ENCODE measurements at regions of chr14 and their contacts with region 1.

Region 1: DNA sequence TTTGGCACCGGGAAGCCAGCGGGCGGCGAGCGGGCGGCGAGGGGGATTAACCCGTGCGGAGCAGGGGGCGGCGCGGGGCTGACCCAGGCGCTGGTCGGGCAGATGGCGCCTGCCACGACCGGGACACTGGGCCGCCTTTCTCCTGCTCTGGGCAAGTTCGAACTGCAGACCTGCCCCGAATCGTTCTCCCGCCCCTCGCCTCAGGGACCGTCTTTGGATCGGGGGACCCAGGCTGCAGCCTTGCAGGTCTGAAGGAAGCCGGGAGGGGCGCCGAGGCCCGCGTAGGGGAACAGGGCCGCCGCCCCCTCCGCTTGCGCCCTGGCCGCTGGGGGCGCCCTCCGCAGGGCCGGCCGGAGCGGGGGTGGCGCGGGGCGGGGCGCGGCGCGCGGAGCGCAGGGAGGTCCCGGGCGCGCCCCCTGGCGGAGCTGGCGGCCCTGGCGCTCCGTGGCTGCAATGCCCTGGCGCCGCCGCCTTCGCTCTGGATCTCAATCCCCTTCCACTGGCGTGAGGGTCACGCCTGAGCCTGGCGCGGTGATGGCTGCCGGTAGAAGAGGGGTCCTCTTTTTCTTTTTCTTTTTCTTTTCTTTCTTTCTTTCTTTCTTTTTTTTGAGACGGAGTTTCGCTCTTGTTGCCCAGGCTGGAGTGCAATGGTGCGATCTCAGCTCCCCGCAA is 449 bp upstream of the LTBP2 start:
- H3K4me3 ChIP-seq: peak overlapping the region; percentile 61
- H3K27ac ChIP-seq: peak overlapping the region; percentile 49; the same call in 1 of the 2 replicates
- H3K4me1 ChIP-seq: peaks cover 3% of the 10 kb centered on the region; the same call in 1 of the 2 replicates
- CTCF ChIP-seq: peak; percentile 62

Region 2: DNA sequence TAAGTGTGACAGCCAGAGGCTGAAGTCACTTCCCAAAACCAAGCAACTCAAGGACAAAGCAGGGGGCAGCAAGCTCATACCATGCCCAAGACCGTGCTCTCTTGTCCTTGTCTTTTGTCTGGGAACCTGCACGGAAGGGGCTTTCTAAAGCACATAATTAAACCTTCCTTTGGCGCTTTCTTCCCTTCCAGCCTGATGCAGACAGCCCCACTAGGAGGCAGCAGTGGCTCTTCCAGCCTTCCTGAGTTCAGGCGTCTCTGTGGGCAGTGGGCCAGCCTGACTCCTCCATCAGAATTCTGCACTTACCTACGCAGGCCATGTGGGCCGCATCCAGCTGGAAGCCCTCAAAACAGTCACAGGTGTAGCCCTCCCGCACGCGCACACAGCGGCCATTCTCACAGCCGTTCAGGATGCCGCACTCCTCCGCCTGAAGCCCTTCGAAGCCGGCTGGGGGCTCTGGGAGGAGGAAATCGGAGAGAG is 111.3 kb before region 1 on chr14:
- CTCF ChIA-PET with region 1: interaction called, 12 read pairs
- POLR2A ChIA-PET with region 1: no interaction called
- H3K4me3 ChIP-seq: no peak overlapping the region
- H3K27ac ChIP-seq: no peak overlapping the region
- H3K4me1 ChIP-seq: no peaks in the 10 kb centered on the region
- CTCF ChIP-seq: no peak

Region 3: DNA sequence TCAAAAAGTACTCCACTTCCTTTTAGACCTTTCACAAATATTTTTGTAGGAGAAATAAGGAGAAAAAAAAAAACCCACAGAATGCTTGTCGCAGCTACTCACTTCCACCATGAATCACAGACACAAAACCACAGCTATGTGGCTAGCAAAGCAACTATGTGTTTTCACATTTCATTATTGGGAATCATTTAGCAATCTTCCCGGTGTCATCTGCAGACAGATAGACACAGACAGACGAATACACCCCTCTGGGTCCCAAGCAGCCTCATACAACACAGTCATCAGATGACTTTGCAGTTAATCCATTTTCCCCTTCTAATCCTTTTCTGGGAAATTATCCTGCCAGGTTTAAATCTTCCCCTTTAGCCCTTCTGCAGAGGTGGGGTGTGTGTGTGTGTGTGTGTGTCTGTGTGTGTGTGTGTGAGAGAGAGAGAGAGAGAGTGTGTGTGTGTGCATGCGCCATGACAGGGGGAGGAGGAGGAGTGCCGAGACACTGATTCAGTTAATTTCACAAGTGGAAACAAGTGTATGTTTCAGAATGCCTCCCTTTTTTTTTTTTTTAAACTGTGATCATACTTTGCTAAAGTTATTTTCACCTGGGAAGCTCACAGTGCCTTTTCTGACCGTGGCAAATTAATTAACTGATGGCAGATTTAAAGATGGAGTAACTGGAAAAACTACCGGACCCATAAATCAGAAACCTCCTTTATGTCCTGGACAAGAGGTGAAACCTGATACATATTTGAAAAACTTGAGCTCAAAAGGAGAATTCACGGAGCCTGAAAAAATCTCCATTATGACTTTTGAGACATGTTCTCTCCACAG is 40.4 kb before region 1 on chr14:
- CTCF ChIA-PET with region 1: interaction called, 20 read pairs
- POLR2A ChIA-PET with region 1: interaction called, 4 read pairs
- H3K4me3 ChIP-seq: peak overlapping the region; percentile 16
- H3K27ac ChIP-seq: peak overlapping the region; percentile 78
- H3K4me1 ChIP-seq: peaks cover 16% of the 10 kb centered on the region
- CTCF ChIP-seq: no peak

Region 4: GRCh38 chr14:74592476-74593201 is 19.8 kb before region 1 on chr14:
- CTCF ChIA-PET with region 1: interaction called, 18 read pairs
- POLR2A ChIA-PET with region 1: no interaction called
- H3K4me3 ChIP-seq: no peak overlapping the region
- H3K27ac ChIP-seq: no peak overlapping the region
- H3K4me1 ChIP-seq: no peaks in the 10 kb centered on the region
- CTCF ChIP-seq: no peak

Region 5: DNA sequence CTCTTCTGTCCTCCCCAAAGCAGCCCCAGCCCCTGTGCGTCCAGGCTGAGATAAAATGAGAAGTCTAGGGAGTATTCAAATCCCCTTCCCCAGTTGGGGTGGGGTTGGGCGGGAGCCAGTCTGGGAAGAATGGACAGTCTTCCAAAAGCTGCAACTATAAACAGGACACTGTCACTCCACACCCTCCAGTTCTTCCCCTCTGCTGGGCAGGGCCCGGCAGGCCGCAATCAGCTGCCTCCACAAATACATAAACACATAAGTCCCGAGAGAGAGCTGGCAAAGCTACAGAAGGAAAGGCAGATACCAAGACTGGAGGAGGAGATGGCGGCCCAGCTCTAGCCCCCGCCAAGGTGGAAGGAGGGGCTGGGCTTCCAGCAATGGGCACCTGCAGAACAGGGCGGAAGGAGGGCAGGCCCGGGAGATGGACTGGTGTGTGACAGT is 13.1 kb before region 1 on chr14:
- CTCF ChIA-PET with region 1: interaction called, 18 read pairs
- POLR2A ChIA-PET with region 1: no interaction called
- H3K4me3 ChIP-seq: no peak overlapping the region
- H3K27ac ChIP-seq: no peak overlapping the region
- H3K4me1 ChIP-seq: no peaks in the 10 kb centered on the region
- CTCF ChIP-seq: no peak

Region 6: GRCh38 chr14:74627076-74627475 is 14.6 kb after region 1 on chr14:
- CTCF ChIA-PET with region 1: interaction called, 11 read pairs
- POLR2A ChIA-PET with region 1: no interaction called
- H3K4me3 ChIP-seq: no peak overlapping the region
- H3K27ac ChIP-seq: no peak overlapping the region
- H3K4me1 ChIP-seq: no peaks in the 10 kb centered on the region
- CTCF ChIP-seq: no peak

Region 7: GRCh38 chr14:74905375-74906142 is 293.1 kb after region 1 on chr14:
- CTCF ChIA-PET with region 1: interaction called, 13 read pairs
- POLR2A ChIA-PET with region 1: no interaction called
- H3K4me3 ChIP-seq: no peak overlapping the region
- H3K27ac ChIP-seq: no peak overlapping the region
- H3K4me1 ChIP-seq: no peaks in the 10 kb centered on the region
- CTCF ChIP-seq: peak; percentile 66

Measured in HEK293 (cell line).